Activated naive CD4-positive, alpha-beta T cell treated with anti-CD3 and anti-CD28 coated beads for 36 hours (primary cell): ENCODE measurements at regions of chr6 and their contacts with region 1.

Region 1: GRCh38 chr6:11093589-11094410 is at the start of gene SMIM13:
- DNase-seq: peak; percentile 98
- H3K4me3 Mint-ChIP-seq: peak within 1 kb of the TSS; percentile 92
- H3K27ac Mint-ChIP-seq: peak within 1 kb of the TSS; percentile 96
- H3K4me1 Mint-ChIP-seq: peaks cover 27% of the 10 kb centered on the region
- H3K27me3 Mint-ChIP-seq: no peaks in the 10 kb centered on the region
- total RNA-seq, gene SMIM13: 5.7 to 7.1 TPM

Region 2: DNA sequence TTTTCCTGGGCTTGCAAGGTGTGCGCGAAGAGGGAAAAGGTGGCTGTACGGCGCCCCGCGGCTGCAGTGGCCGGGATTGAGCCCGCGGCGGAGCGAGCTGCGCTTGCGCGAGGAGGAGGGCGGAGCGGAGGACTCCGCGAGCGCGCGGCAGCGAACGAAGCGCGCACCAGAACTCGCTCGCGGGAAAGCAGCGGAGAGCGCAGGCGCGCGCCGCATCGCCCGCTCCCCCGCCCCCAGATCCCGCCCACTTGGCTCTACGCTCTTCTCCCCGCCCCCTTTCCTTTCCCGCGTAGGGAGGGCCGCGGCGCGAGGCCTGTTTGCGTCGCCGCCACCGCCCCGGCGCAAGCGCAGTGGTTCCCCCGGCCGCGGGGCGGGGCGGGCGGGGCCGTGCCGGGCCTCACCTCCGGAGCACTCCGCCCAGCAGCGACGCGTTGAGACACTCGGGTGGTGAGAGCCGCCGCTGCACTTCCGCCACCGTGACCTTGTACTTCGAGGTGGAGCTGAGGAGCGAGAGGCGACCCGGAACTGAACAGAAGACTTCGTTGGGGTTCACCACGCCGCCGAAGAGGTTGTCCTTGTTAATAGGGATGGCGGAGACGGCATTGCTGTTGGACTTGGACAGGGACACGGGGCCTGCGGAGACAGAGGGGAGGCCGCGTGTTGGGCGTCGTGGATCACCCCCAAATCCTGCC is 689.5 kb before region 1 on chr6:
- CTCF ChIA-PET with region 1: no interaction called
- intact Hi-C with region 1: loop called (anchors 1 kb)
- DNase-seq: peak; percentile 95
- H3K4me3 Mint-ChIP-seq: peak overlapping the region; percentile 84
- H3K27ac Mint-ChIP-seq: peak overlapping the region; percentile 59
- H3K4me1 Mint-ChIP-seq: peaks cover 7% of the 10 kb centered on the region
- H3K27me3 Mint-ChIP-seq: peaks cover 63% of the 10 kb centered on the region

Region 3: GRCh38 chr6:10694302-10695085 is 399.3 kb before region 1 on chr6 and contains the starts of genes C6orf52 and PAK1IP1:
- CTCF ChIA-PET with region 1: no interaction called
- intact Hi-C with region 1: loop called (anchors 1 kb)
- DNase-seq: peak; percentile 94
- H3K4me3 Mint-ChIP-seq: peak within 1 kb of the TSS; percentile 97
- H3K27ac Mint-ChIP-seq: peak within 1 kb of the TSS; percentile 98
- H3K4me1 Mint-ChIP-seq: peaks cover 40% of the 10 kb centered on the region
- H3K27me3 Mint-ChIP-seq: no peaks in the 10 kb centered on the region
- total RNA-seq, gene C6orf52: 1.3 to 3.9 TPM
- total RNA-seq, gene PAK1IP1: 28.6 to 29.2 TPM

Region 4: DNA sequence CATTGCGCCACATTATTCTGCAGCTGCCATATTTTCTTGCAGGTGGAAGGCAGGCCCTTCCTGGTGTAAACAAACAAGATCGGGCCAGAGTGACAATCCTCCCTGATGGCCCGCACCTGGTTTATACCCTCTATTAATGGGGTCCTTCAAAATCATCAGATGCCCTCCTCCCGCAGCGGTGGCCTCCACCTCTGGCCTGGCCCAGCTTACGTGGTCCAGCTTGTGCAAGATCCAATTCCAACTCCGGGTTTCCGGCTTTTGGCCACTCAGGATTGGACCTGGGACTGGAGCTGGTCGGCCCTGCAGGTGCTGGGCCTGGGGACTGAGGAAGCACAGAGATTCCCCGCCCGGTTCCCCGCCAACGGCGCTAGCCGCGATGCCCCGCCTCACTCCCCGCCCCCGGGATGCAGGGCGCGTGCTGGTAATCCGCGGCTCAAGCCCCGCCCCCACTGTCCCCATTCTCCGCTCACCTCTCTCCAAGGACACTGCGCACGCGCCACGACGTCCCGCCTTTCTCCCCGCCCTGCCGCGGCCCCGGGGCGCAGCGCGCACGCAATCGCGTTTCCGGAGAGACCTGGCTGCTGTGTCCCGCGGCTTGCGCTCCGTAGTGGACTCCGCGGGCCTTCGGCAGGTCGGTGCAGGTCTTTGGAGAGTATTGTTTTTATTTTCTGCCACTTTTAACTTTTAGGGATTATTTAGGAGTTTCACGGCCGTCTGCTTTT is 346.4 kb before region 1 on chr6 and contains the start of gene TMEM14B:
- CTCF ChIA-PET with region 1: no interaction called
- intact Hi-C with region 1: loop called (anchors 1 kb)
- DNase-seq: peak; percentile 100
- H3K4me3 Mint-ChIP-seq: peak within 1 kb of the TSS; percentile 91
- H3K27ac Mint-ChIP-seq: peak within 1 kb of the TSS; percentile 92
- H3K4me1 Mint-ChIP-seq: peaks cover 48% of the 10 kb centered on the region
- H3K27me3 Mint-ChIP-seq: no peaks in the 10 kb centered on the region
- total RNA-seq, gene TMEM14B: 78.7 to 79.5 TPM

Region 5: DNA sequence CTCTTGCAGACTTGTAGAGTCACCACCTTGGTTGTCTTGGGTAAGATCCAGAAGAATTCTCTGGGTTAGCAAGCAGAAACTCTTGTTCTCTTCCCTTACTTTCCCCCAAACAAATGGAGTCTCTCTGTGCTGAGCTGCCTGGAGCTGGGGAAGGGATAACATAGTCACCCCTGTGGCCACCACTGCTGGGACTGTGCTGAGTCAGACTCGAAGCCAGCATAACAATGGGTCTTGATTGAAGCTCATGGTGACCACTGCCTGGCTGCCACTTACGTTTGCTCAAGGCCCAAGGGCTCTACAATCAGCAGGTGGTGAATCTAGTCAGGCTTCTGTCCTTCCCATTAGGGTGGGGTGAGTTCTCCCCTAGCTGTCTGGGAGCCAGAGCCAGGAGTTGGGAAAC is 33.1 kb after region 1 on chr6:
- CTCF ChIA-PET with region 1: no interaction called
- intact Hi-C with region 1: loop called (anchors 5 kb)
- DNase-seq: no peak
- H3K4me3 Mint-ChIP-seq: no peak overlapping the region
- H3K27ac Mint-ChIP-seq: no peak overlapping the region
- H3K4me1 Mint-ChIP-seq: peaks cover 19% of the 10 kb centered on the region
- H3K27me3 Mint-ChIP-seq: no peaks in the 10 kb centered on the region

Region 6: GRCh38 chr6:11317885-11318771 is 224.3 kb after region 1 on chr6:
- CTCF ChIA-PET with region 1: no interaction called
- intact Hi-C with region 1: loop called (anchors 1 kb)
- DNase-seq: peak; percentile 91
- H3K4me3 Mint-ChIP-seq: no peak overlapping the region
- H3K27ac Mint-ChIP-seq: peak overlapping the region; percentile 90
- H3K4me1 Mint-ChIP-seq: peaks cover 43% of the 10 kb centered on the region
- H3K27me3 Mint-ChIP-seq: no peaks in the 10 kb centered on the region

Region 7: GRCh38 chr6:11711003-11711983 is 617.5 kb after region 1 on chr6:
- CTCF ChIA-PET with region 1: no interaction called
- intact Hi-C with region 1: loop called (anchors 10 kb)
- DNase-seq: peak; percentile 79
- H3K4me3 Mint-ChIP-seq: peak overlapping the region; percentile 57
- H3K27ac Mint-ChIP-seq: peak overlapping the region; percentile 97
- H3K4me1 Mint-ChIP-seq: peaks cover 79% of the 10 kb centered on the region
- H3K27me3 Mint-ChIP-seq: no peaks in the 10 kb centered on the region